Mammary epithelial cell (primary cell): ENCODE measurements at regions of chr14 and their contacts with region 1.

Region 1: GRCh38 chr14:61252369-61253063 is 28.6 kb downstream of the TMEM30B start:
- DNase-seq: peak; percentile 89
- H3K4me3 ChIP-seq: no peak overlapping the region
- H3K27ac ChIP-seq: no peak overlapping the region
- H3K4me1 ChIP-seq: peaks cover 6% of the 10 kb centered on the region
- H3K27me3 ChIP-seq: no peaks in the 10 kb centered on the region
- CTCF ChIP-seq: peak; percentile 93 to 95

Region 2: DNA sequence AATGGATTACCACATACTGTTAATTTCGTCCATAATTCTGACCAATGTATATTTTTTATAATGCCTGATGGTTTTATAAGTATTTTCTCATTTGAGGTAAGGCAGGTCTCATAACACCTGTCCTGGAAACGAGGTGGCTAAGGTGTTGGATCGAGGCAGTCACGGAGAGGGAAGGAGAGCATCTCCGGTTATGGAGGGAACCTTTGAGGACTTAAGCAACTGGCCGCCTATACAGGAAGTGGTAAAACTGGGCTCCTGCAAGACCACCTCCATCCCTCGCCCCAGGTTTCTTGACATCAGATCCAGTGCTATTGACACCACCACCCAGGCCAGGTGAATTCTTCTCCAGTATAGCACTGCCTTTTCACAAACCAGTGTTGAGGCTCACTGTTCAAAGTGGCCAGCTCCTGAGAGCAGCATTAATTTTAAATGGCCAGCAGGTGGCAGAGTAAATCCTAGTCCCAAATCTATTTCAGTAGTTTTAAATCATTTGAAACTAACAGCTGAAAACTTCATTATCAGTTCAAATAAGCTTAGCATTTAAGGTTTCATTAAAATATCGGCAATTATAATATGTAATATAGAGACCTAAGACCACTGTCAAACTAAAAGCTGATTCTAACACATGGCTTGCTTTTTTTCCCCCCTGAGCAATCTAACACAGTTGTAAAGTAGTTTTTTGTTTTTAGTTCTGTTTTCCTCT is 902.7 kb before region 1 on chr14:
- CTCF ChIA-PET with region 1: no interaction called
- dilution Hi-C with region 1: no loop called
- in situ Hi-C with region 1: loop called in 1 of 2 experiments (anchors 25 kb)
- intact Hi-C with region 1: loop called (anchors 2 kb)
- DNase-seq: peak; percentile 25
- H3K4me3 ChIP-seq: no peak overlapping the region
- H3K27ac ChIP-seq: no peak overlapping the region
- H3K4me1 ChIP-seq: no peaks in the 10 kb centered on the region
- H3K27me3 ChIP-seq: no peaks in the 10 kb centered on the region
- CTCF ChIP-seq: peak; percentile 58 to 64

Region 3: GRCh38 chr14:60622917-60623257 is 629.6 kb before region 1 on chr14:
- CTCF ChIA-PET with region 1: no interaction called
- dilution Hi-C with region 1: no loop called
- in situ Hi-C with region 1: loop called (anchors 10 kb)
- intact Hi-C with region 1: loop called (anchors 1 kb)
- DNase-seq: no peak
- H3K4me3 ChIP-seq: no peak overlapping the region
- H3K27ac ChIP-seq: no peak overlapping the region
- H3K4me1 ChIP-seq: no peaks in the 10 kb centered on the region
- H3K27me3 ChIP-seq: no peaks in the 10 kb centered on the region
- CTCF ChIP-seq: no peak

Region 4: DNA sequence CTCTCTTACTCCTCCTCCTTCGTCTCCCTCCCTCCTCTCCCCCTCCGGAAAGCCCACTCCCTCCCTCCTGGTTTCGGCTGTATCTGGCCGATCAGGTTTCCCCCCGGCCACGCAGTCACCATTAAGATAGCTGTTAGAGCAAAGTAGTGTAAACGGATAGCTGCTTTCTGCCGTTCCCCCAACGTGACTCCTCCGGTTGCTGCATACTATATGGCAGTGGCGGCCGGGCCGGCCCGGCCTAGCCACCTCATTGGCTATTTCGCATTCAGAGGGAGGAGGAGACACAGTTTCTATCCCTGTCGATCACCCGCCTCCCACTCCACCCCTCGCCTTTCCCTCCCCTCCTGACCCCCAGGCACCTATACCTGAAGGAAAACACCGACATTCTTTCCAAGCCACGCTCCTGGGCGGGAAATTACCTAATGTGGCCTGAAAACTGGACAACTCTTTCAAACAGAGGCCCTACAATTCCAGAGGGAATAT is 528.3 kb before region 1 on chr14 and contains the start of gene SIX4:
- CTCF ChIA-PET with region 1: no interaction called
- dilution Hi-C with region 1: no loop called
- in situ Hi-C with region 1: no loop called
- intact Hi-C with region 1: loop called (anchors 2 kb)
- DNase-seq: peak; percentile 92
- H3K4me3 ChIP-seq: peak within 1 kb of the TSS; percentile 52 to 92 (median 71)
- H3K27ac ChIP-seq: peak within 1 kb of the TSS; percentile 66
- H3K4me1 ChIP-seq: peaks cover 5% of the 10 kb centered on the region
- H3K27me3 ChIP-seq: no peaks in the 10 kb centered on the region
- CTCF ChIP-seq: no peak
- total RNA-seq, gene SIX4: 10.7 to 13.2 TPM

Region 5: GRCh38 chr14:60980811-60981632 is 271.5 kb before region 1 on chr14 and contains the starts of genes SLC38A6 and TRMT5:
- CTCF ChIA-PET with region 1: no interaction called
- dilution Hi-C with region 1: no loop called
- in situ Hi-C with region 1: no loop called
- intact Hi-C with region 1: loop called (anchors 2 kb)
- DNase-seq: peak; percentile 95
- H3K4me3 ChIP-seq: peak within 1 kb of the TSS; percentile 65 to 97 (median 90)
- H3K27ac ChIP-seq: peak within 1 kb of the TSS; percentile 99
- H3K4me1 ChIP-seq: peaks cover 28% of the 10 kb centered on the region
- H3K27me3 ChIP-seq: no peaks in the 10 kb centered on the region
- CTCF ChIP-seq: no peak
- total RNA-seq, gene SLC38A6: 15.2 to 46.5 TPM
- total RNA-seq, gene TRMT5: 15.3 to 18.6 TPM

Region 6: DNA sequence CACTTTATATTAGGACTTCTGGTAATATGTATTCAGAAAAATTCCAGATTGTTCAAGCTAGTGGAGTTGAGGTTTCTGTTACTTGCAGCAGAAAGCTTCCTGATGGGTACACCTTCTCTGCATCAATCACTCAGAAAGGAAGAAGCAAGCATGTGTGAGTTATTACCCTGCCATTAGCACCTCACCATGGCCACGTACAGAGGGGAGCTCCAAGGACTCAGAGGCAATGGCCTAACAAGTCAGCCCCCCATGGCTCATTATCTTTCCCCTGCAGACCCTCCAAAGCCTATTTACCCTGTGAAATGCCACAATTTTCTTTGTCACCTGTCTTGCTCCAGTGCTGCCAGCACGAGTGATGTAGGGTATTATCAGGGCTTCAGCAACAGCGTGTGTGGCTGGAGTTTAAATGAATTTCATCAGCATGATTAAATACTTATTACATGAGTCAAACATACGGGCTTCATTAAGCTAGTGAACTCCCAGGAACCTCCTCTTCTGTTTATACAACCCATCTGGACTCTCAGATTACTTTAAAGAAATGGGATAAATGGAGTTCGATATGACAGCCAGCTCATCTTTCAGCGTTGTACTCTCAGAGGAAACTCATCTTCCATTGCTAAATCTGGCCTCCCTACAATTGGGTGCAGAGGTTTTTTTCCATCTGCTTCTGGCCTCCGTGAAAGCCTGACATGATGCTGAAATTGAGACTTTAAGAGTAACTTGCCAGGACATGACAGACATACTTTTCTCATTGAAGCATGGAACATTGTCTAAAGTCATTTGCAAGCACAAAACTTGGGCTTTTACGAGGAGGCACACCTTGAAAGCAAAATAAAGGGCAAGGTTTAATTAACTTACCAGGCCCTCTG is 107.2 kb before region 1 on chr14:
- CTCF ChIA-PET with region 1: no interaction called
- dilution Hi-C with region 1: no loop called
- in situ Hi-C with region 1: no loop called
- intact Hi-C with region 1: loop called (anchors 2 kb)
- DNase-seq: peak; percentile 82
- H3K4me3 ChIP-seq: no peak overlapping the region
- H3K27ac ChIP-seq: peak overlapping the region; percentile 82
- H3K4me1 ChIP-seq: peaks cover 51% of the 10 kb centered on the region
- H3K27me3 ChIP-seq: no peaks in the 10 kb centered on the region
- CTCF ChIP-seq: no peak

Region 7: DNA sequence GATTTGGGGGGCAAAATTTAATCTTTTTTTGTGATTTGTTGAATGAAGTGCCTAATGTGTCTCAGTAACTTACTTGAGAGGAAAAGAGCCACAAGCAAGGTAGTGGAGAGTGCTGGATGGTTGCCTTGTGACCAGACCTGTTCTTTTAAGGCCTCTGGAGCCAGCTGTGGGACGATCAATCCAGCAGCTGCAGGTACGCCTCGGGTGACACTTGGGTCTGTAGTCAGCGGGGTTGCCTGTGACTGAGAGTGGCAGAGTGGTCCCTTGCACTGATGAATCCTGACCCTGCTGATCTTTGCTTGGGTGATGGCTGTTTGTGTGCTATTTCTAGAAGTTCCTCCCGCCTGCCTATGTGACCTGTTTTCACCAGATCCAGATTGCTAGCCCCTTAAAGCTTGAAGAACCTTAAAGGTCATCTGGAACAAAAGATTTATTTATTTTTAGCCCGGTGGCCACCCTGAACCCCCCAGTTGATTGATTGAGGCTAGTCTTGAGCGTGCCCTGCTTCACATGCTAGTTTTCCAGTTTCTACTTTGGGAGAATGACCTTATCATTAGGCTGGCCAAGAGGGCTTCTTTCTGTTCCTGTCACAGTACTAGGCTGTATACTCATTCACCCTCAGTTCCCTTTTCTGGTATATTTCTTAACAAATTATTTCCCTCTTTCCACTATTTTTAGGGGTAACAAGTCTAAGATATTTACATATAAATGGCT is 92.1 kb after region 1 on chr14:
- CTCF ChIA-PET with region 1: no interaction called
- dilution Hi-C with region 1: no loop called
- in situ Hi-C with region 1: no loop called
- intact Hi-C with region 1: no loop called
- DNase-seq: no peak
- H3K4me3 ChIP-seq: no peak overlapping the region
- H3K27ac ChIP-seq: no peak overlapping the region
- H3K4me1 ChIP-seq: peaks cover 16% of the 10 kb centered on the region
- H3K27me3 ChIP-seq: no peaks in the 10 kb centered on the region
- CTCF ChIP-seq: no peak